ENCODE measurements at regions of chr4 and their contacts with region 1.

Region 1: GRCh38 chr4:3106339-3107186 is 32.1 kb downstream of the HTT start:
- DNase-seq: peak; percentile 79
- H3K4me3 Mint-ChIP-seq: no peak overlapping the region
- H3K27ac Mint-ChIP-seq: peak overlapping the region; percentile 11
- H3K4me1 Mint-ChIP-seq: peaks cover 24% of the 10 kb centered on the region
- H3K27me3 Mint-ChIP-seq: no peaks in the 10 kb centered on the region

Region 2: DNA sequence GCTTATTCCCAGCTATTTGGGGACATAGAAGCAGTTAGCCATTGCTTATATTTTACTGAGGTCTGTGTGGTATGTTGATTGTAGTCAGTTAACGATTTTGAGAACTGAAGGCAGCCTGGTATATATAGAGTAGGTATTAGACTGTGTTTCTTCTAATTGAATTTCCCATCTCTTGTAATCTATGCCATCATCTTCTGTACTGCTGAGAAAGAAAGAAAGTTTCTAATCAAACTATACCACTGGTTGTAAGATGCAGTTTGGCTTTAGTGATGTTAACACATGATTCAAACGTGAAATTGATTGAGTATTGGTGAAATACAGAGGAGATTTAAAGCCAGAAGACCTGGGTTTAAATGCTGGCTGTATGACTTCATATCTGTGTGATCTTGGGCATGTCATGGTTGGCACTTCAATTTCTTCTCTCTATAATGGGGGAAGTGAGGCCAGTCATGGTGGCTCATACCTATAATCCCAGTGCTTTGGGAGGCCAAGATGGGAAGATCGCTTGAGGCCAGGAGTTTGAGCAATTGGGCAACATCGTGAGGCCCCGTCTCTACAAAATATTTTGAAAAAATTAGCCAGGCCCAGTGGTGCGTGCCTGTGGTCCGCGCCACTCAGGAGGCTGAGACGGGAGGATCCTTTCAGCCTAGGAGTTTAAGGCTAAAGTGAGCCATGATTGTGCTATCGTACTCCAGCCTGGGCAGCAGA is 20.5 kb before region 1 on chr4:
- intact Hi-C with region 1: loop called (anchors 2 kb)
- DNase-seq: no peak
- H3K4me3 Mint-ChIP-seq: no peak overlapping the region
- H3K27ac Mint-ChIP-seq: peak overlapping the region; percentile 80
- H3K4me1 Mint-ChIP-seq: peaks cover 58% of the 10 kb centered on the region
- H3K27me3 Mint-ChIP-seq: no peaks in the 10 kb centered on the region

Region 3: GRCh38 chr4:3168029-3168428 is 61.5 kb after region 1 on chr4:
- intact Hi-C with region 1: no loop called
- DNase-seq: no peak
- H3K4me3 Mint-ChIP-seq: no peak overlapping the region
- H3K27ac Mint-ChIP-seq: peak overlapping the region; percentile 20
- H3K4me1 Mint-ChIP-seq: peaks cover 19% of the 10 kb centered on the region
- H3K27me3 Mint-ChIP-seq: no peaks in the 10 kb centered on the region

Region 4: GRCh38 chr4:3201718-3202702 is 95.4 kb after region 1 on chr4:
- intact Hi-C with region 1: loop called (anchors 1 kb)
- DNase-seq: peak; percentile 74
- H3K4me3 Mint-ChIP-seq: peak overlapping the region; percentile 70
- H3K27ac Mint-ChIP-seq: peak overlapping the region; percentile 94
- H3K4me1 Mint-ChIP-seq: peaks cover 31% of the 10 kb centered on the region
- H3K27me3 Mint-ChIP-seq: no peaks in the 10 kb centered on the region

Region 5: DNA sequence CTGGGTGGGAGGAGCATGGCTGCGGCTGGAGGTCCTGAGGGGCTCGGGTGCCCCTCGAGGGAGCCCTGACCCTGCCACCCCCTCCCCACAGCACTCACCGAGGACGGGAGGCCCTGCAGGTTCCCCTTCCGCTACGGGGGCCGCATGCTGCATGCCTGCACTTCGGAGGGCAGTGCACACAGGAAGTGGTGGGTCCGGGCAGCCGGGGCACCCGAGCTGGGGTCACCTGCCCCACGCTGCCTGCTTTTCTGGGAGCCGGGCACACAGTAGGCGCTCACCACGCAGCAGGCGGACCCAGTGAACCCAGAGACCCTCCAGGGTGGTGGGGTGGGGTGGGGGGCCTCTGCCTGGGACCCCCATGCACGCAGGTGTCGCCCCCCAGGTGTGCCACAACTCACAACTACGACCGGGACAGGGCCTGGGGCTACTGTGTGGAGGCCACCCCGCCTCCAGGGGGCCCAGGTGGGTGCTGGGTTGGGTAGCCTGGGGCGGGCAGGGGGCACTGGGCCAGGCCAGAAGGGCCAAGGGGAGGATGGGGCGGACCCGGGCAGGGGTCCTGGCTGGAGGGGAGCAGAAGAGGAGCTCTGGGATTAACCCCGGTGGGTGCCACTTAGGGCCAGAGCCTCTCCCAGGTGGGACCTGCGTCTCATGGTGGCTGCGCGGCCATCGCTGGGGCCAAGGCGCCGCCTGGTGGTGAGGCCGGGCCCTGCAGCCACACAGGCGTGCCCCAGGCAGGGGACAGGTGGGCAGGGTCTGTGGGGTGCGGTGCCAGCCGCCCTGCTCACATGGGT is 336.6 kb after region 1 on chr4:
- intact Hi-C with region 1: loop called (anchors 1 kb)
- DNase-seq: peak; percentile 43
- H3K4me3 Mint-ChIP-seq: no peak overlapping the region
- H3K27ac Mint-ChIP-seq: no peak overlapping the region
- H3K4me1 Mint-ChIP-seq: no peaks in the 10 kb centered on the region
- H3K27me3 Mint-ChIP-seq: no peaks in the 10 kb centered on the region